HEK293T (cell line): ENCODE measurements at regions of chr11 and their contacts with region 1.

Region 1: DNA sequence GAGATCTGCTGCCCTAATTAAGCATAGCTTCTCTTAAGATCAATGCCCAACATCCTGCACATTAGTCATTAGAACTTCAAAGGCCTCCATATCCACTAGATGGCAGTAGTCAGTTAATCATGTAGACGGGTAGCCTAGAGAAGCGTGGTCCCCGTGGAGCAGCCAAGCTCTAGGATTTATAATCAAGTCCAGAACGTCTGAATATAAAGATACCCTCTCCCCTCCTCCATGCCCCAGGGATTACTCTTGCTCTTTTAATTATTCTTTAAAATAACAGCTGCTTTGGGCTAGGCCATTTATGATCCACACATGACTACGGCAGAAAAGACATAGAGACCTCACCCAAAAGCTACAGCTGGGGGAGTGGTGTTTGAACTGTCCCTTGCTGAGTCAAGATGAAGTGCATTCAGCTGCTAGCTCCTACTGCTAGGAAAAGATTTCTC is 327.6 kb upstream of the PLET1 start:
- DNase-seq: peak; percentile 76

Region 2: GRCh38 chr11:112485280-112485679 is 103.0 kb before region 1 on chr11:
- CTCF ChIA-PET with region 1: no interaction called
- POLR2A ChIA-PET with region 1: no interaction called
- DNase-seq: no peak

Region 3: GRCh38 chr11:112795142-112795815 is 207.0 kb after region 1 on chr11:
- CTCF ChIA-PET with region 1: interaction called, 17 read pairs
- POLR2A ChIA-PET with region 1: interaction called, 3 read pairs
- DNase-seq: peak; percentile 75

Region 4: DNA sequence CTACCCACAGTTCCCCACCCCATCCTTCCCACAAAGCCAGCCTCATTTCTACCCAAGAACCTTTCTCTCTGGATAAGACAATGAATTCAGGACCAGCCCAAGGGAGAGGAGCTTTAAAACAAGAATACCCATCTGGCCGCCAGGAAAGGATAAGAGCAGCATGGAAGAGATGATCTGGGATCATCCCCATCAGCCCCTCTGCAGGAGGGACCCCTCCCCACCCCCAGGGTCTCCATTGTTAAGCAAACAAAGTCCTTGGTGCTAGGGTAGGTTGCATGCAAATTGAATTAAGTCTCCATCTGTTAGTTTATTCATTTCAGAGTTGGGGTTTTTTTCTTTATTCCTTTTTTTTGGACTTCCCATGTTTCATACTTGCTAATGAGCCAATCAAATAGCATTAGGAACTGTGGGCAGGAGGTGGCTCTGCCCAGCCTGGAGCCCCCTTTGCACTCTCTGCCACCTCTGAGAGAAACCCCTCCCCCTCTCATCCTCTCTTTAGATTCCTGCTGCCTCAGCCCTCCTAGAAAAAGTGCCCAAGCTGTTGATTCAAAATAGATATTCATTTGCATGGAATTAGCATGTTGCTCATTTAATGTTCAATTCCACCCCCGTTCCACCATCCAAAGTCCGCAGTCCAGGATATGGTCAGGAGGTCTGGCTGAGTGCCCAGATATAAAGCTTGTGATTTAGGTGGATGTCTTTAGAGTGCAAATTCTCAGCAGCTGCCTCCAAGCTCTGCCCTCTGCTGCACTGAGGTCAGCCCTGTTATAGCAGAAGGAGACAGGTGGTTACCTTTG is 234.4 kb after region 1 on chr11:
- CTCF ChIA-PET with region 1: no interaction called
- POLR2A ChIA-PET with region 1: no interaction called
- DNase-seq: no peak

Region 5: GRCh38 chr11:112834277-112834755 is 246.0 kb after region 1 on chr11:
- CTCF ChIA-PET with region 1: no interaction called
- POLR2A ChIA-PET with region 1: no interaction called
- DNase-seq: no peak

Region 6: DNA sequence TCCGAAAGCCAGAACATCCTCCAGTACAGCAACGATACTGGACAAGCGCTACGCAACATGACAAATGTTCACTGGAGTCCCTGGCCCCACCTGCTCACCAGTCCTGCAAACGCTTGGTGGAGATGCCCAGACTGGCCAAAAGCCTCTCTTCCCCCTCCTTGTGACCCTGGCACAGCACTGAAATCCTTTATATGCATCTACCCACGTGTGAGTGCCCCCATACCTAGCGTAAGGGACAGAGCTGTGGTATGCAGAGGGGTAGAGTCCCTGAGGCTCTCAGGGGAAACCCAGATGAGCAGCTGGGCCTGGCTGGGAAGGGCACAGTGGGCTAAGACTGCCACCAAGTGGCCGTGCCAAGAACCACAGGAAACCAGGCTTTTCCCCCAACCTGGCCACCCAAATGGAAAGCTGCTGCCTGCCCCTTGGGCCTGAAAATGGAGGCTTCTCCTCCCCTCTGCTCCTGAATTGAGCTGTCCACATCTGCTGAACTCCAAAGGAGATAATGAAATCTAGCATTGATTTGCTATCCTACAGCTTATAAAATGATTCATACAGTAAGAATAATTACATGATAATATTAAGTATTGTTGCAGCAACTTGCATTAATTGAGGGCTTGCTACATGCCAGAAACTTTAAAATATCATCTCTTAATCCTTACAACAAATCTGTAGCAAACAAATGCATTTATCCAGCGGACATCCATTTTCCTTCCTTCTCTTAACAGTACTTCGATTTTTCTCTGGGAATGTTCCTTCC is 701.3 kb after region 1 on chr11:
- CTCF ChIA-PET with region 1: interaction called, 21 read pairs
- POLR2A ChIA-PET with region 1: no interaction called
- DNase-seq: peak; percentile 79